ENCODE measurements at regions of chr16 and their contacts with region 1.

Region 1: GRCh38 chr16:29710227-29711219 is 31.5 kb downstream of the QPRT start:
- DNase-seq: peak; percentile 75
- CTCF ChIP-seq: peak; percentile 39

Region 2: GRCh38 chr16:29645694-29646187 is 64.8 kb before region 1 on chr16:
- in situ Hi-C with region 1: loop called (anchors 10 kb)
- DNase-seq: peak; percentile 78
- CTCF ChIP-seq: no peak

Region 3: GRCh38 chr16:29926005-29926710 is 215.6 kb after region 1 on chr16 and contains the start of gene KCTD13:
- in situ Hi-C with region 1: no loop called
- DNase-seq: peak; percentile 100
- CTCF ChIP-seq: no peak

Region 4: GRCh38 chr16:30615358-30616091 is 905.0 kb after region 1 on chr16:
- in situ Hi-C with region 1: no loop called
- DNase-seq: peak; percentile 69
- CTCF ChIP-seq: peak; percentile 79

Measured in GM13976 (cell line).